GM12878 (cell line): ENCODE measurements at regions of chr3 and their contacts with region 1.

Region 1: DNA sequence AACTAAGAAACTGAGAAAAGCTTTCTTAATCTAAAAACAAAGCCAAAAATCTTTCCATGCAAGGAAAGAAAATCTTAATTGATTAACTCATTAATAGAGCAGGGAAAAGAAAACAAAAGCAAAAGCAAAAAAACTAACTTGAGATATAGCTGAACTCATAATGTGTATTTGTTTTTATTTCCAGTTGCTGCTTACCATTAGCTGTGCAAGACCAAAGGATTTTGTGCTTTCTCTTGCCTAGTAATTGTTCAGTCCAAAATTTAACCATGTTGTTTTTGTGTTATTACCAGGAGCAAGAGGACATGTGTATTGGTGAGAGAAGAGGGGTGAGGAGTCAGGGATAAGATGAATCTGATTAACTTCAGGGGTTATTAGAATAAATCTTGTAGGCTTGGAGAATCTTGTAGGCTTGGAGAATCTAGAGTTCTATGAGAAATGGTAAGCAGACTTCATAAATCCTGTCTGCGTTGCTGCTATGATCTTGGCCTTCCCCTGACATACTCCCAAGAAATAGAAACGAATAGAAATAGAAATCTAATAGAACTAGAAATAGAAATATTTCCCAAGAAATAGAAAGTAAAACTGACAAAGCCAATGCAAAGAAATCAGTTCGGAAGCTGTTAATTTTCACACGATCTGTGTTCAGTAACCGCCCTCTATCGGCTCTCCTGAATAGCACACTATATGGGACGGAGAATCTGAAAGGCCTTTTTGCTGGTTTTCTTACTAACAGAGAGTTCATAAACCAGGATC is 72.6 kb upstream of the TNFSF10 start:
- DNase-seq: peak; percentile 60
- ATAC-seq: peak; percentile 48
- H3K4me3 ChIP-seq: peak overlapping the region; percentile 37; the same call in 1 of the 2 replicates
- H3K27ac ChIP-seq: peak overlapping the region; percentile 62
- H3K4me1 ChIP-seq: peaks cover 29% of the 10 kb centered on the region
- H3K27me3 ChIP-seq: no peaks in the 10 kb centered on the region
- CTCF ChIP-seq: peak; percentile 83 to 91 (median 87)
- EP300 ChIP-seq: no peak
- POLR2A ChIP-seq: no peak
- RAD21 ChIP-seq: peak; percentile 96

Region 2: GRCh38 chr3:172341482-172342059 is 254.2 kb before region 1 on chr3:
- CTCF ChIA-PET with region 1: interaction called, 17 read pairs
- POLR2A ChIA-PET with region 1: interaction called, 4 read pairs
- RAD21 ChIA-PET with region 1: interaction called, 7 read pairs
- SMC1A ChIA-PET with region 1: interaction called, 14 read pairs
- in situ Hi-C with region 1: no loop called
- intact Hi-C with region 1: no loop called
- DNase-seq: peak; percentile 24
- ATAC-seq: peak; percentile 92
- H3K4me3 ChIP-seq: no peak overlapping the region
- H3K27ac ChIP-seq: no peak overlapping the region
- H3K4me1 ChIP-seq: no peaks in the 10 kb centered on the region
- H3K27me3 ChIP-seq: no peaks in the 10 kb centered on the region
- CTCF ChIP-seq: peak; percentile 53 to 67 (median 59); a peak in 5 of 6 replicates
- EP300 ChIP-seq: no peak
- POLR2A ChIP-seq: no peak
- RAD21 ChIP-seq: peak; percentile 73

Region 3: DNA sequence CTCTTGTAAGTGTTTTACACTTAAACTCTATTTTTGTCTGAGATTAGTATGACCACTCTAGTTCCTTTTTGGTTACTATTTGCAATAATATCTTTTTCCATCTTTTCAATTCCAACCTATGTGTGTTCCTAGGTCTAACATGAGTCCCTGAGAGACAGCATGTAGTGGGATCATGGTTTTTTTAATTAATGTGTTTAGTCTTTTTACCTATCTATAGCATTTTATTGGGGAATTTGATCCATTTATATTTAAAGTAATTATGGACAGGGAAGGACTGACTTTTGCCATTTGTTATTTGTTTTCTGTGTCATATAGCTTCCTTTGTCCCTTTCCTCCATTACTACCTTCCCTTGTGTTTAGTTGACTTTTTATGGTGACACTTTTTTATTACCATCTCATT is 94.3 kb before region 1 on chr3:
- CTCF ChIA-PET with region 1: interaction called, 36 read pairs
- POLR2A ChIA-PET with region 1: no interaction called
- RAD21 ChIA-PET with region 1: interaction called, 9 read pairs
- SMC1A ChIA-PET with region 1: interaction called, 6 read pairs
- in situ Hi-C with region 1: no loop called
- intact Hi-C with region 1: no loop called
- DNase-seq: no peak
- ATAC-seq: no peak
- H3K4me3 ChIP-seq: no peak overlapping the region
- H3K27ac ChIP-seq: no peak overlapping the region
- H3K4me1 ChIP-seq: no peaks in the 10 kb centered on the region
- H3K27me3 ChIP-seq: no peaks in the 10 kb centered on the region
- CTCF ChIP-seq: no peak
- EP300 ChIP-seq: no peak
- POLR2A ChIP-seq: no peak
- RAD21 ChIP-seq: no peak

Region 4: GRCh38 chr3:172530566-172530965 is 65.3 kb before region 1 on chr3:
- CTCF ChIA-PET with region 1: interaction called, 11 read pairs
- POLR2A ChIA-PET with region 1: no interaction called
- RAD21 ChIA-PET with region 1: interaction called, 9 read pairs
- SMC1A ChIA-PET with region 1: interaction called, 5 read pairs
- in situ Hi-C with region 1: no loop called
- intact Hi-C with region 1: no loop called
- DNase-seq: no peak
- ATAC-seq: peak; percentile 70
- H3K4me3 ChIP-seq: no peak overlapping the region
- H3K27ac ChIP-seq: no peak overlapping the region
- H3K4me1 ChIP-seq: no peaks in the 10 kb centered on the region
- H3K27me3 ChIP-seq: no peaks in the 10 kb centered on the region
- CTCF ChIP-seq: no peak
- EP300 ChIP-seq: no peak
- POLR2A ChIP-seq: no peak
- RAD21 ChIP-seq: no peak

Region 5: DNA sequence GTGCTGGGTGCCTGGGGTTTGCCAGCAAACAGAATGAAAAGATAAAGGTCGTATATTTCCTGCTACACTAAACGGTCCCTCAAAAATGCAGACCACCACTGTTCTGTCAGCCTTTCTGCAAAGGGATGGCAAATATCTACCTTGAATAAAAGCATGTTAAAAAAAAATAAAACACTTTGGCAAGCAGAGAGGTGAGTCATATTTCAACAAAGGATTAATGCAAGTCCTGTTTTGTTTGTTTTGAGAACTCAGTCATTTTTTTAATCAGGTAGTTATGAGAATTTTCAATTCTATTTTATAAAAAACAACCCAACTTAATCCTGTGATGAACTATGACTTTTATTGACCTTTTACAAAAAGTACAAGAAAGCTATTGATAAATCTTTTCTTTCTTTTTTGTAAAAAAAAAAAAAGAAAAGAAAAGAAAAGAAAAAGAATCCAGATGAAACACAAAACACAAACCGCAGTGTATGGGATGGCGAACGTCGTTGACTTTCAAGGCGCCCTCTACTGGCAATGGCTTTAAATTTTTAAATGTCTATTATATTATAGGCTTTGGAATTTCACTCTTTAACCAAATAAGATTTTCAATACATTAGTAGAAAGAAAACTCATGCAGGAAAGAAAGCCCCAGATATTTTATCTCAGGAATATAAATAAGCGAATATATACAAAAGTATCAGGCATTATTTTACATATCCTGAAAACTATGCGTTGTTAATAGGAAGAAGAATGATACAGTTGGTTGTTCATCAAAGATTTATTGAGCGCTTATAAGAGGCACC is 27.3 kb after region 1 on chr3:
- CTCF ChIA-PET with region 1: interaction called, 19 read pairs
- POLR2A ChIA-PET with region 1: interaction called, 3 read pairs
- RAD21 ChIA-PET with region 1: interaction called, 9 read pairs
- SMC1A ChIA-PET with region 1: interaction called, 12 read pairs
- in situ Hi-C with region 1: no loop called
- intact Hi-C with region 1: no loop called
- DNase-seq: no peak
- ATAC-seq: peak; percentile 69
- H3K4me3 ChIP-seq: no peak overlapping the region
- H3K27ac ChIP-seq: no peak overlapping the region
- H3K4me1 ChIP-seq: no peaks in the 10 kb centered on the region
- H3K27me3 ChIP-seq: no peaks in the 10 kb centered on the region
- CTCF ChIP-seq: peak; percentile 33 to 63 (median 49)
- EP300 ChIP-seq: no peak
- POLR2A ChIP-seq: no peak
- RAD21 ChIP-seq: peak; percentile 46